GM23248 (cell line): ENCODE measurements at regions of chr6 and their contacts with region 1.

Region 1: DNA sequence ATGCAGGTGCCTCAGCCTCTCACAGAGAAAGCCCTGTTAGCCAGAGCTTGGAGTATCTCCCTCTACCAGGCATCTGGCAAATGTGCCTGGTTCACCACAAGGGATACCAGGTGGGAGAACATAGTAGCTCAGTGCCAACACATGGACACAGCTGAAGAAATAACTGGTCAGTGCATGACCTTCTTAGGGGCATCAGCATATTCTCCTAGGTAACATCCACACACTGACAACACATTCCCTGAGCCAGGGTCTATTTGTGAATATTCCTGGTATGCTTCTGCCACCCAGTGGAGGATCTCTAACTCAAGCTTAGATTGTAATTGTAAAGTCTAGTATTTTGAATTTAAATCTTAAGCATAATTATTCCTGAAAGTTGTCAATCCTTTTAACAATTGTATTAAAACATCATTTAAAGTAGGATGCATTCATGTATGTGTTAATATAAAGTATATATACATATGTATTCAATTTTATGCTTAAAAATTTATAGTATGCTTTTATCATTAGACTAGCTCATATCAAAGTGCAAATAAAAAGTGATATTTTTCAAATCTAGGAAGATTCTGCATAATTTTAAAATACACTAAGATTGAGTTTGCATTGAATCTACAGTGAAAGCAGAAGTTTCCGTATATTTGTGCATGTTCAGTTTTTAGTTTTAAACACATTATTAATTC is 45.3 kb upstream of the COL21A1 start:
- DNase-seq: peak; percentile 77
- H3K4me3 ChIP-seq: no peak overlapping the region
- H3K27ac ChIP-seq: no peak overlapping the region
- H3K4me1 ChIP-seq: peaks cover 7% of the 10 kb centered on the region
- H3K27me3 ChIP-seq: no peaks in the 10 kb centered on the region

Region 2: GRCh38 chr6:55445648-55446204 is 846.9 kb before region 1 on chr6:
- in situ Hi-C with region 1: loop called (anchors 25 kb)
- DNase-seq: peak; percentile 56
- H3K4me3 ChIP-seq: no peak overlapping the region
- H3K27ac ChIP-seq: no peak overlapping the region
- H3K4me1 ChIP-seq: peaks cover 14% of the 10 kb centered on the region
- H3K27me3 ChIP-seq: peaks cover 3% of the 10 kb centered on the region; the same call in 1 of the 2 replicates

Region 3: GRCh38 chr6:55980627-55981211 is 311.9 kb before region 1 on chr6:
- in situ Hi-C with region 1: loop called (anchors 5 kb)
- DNase-seq: peak; percentile 67
- H3K4me3 ChIP-seq: no peak overlapping the region
- H3K27ac ChIP-seq: no peak overlapping the region
- H3K4me1 ChIP-seq: no peaks in the 10 kb centered on the region
- H3K27me3 ChIP-seq: no peaks in the 10 kb centered on the region

Region 4: DNA sequence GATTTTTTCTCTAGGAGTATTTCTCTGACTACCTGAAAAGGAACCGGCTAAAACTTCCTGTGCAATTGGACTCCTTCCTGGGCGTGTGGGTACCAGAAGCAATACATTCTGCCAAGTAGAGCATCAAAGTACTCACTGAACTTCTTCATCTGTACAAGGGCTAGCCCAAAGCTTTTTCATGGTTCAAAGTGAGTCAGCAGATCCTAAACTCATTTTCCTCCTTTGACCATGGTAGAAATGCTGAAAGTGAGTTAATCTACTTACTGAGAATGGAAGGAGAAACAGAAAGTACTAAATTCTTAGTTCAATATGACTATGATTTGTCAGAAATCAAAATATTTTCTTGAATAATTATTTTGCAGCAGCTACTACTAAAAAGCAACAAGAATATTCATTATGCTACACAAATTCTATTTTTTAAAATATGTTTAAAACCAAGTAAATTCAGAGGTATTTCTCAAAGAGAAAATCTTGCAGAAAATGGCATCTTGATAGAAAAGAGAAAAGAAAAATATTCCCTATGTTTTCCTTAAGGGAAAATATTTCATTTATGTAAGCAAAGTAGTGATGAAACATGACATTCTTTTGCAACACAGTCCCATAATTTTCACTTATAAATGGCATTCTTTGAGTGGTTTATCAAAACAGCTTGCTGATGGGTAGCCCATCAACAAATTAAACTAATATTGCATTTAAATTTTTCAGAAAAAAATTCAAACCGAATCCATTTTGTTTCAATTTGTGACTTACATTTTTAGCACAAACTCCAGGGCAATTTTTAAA is 658.6 kb after region 1 on chr6:
- in situ Hi-C with region 1: no loop called
- DNase-seq: peak; percentile 51
- H3K4me3 ChIP-seq: peak overlapping the region; percentile 79
- H3K27ac ChIP-seq: peak overlapping the region; percentile 72
- H3K4me1 ChIP-seq: peaks cover 67% of the 10 kb centered on the region
- H3K27me3 ChIP-seq: no peaks in the 10 kb centered on the region